Body of pancreas (tissue), 4 donors: ENCODE measurements at regions of chr5 and their contacts with region 1.

Region 1: DNA sequence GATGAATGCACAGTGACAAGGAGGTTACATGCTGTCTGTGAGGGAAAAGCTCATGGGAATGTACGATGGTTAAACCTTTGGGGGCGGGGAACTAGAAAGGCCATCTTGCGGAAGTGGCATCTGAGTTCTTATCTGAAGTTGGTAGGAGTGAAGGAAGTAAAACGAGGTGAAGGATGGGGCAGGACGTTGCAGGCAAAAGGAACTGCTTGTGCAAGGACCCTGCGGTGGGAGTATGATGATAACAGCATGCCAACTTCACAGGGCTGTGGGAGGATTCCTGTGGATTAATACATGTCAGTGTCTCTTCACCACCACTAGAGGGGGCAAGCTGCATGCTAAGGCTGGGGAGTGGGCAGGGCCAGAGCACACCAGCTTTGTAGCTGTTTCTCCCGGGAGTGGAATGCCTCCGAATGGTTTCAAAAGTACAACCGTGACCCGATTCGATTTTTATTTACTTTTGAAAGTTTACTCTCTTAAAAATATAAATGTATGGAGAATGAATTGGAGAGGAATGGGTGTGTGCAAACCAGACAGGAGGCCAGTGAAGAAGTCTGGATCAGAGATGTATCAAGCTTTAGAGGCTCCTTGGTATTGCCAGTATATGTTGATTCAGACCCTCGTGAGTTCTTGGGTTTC is 62.5 kb downstream of the CYFIP2 start:
- DNase-seq: peak; percentile 48 to 70 (median 68)
- ATAC-seq: peak; percentile 93
- H3K4me3 ChIP-seq: no peak overlapping the region
- H3K27ac ChIP-seq: no peak overlapping the region
- H3K4me1 ChIP-seq: no peaks in the 10 kb centered on the region
- H3K27me3 ChIP-seq: no peaks in the 10 kb centered on the region
- CTCF ChIP-seq: peak; percentile 68 to 88 (median 83)
- POLR2A ChIP-seq: no peak

Region 2: DNA sequence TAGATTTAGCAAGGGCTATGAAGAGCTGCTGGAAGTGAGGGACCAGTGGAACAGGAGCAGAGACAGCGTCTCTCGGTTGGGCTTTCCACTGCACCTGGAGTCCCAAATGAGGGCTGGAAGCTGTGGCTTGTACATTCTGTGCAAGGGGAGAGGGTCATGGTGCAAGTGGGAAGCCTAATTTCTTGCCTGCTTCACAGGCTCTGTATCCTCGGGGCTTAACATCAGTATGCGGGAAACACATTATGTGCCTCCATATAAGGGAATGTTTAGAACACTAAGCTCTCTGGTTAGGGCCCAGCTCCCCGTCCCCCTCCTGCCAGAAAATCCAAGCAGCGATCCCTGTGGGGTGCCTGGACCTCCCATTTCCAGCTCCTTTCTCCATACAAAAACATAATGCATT is 42.6 kb after region 1 on chr5:
- intact Hi-C with region 1: no loop called
- DNase-seq: no peak
- ATAC-seq: no peak
- H3K4me3 ChIP-seq: no peak overlapping the region
- H3K27ac ChIP-seq: no peak overlapping the region
- H3K4me1 ChIP-seq: no peaks in the 10 kb centered on the region
- H3K27me3 ChIP-seq: no peaks in the 10 kb centered on the region
- CTCF ChIP-seq: no peak
- POLR2A ChIP-seq: no peak

Region 3: GRCh38 chr5:157476702-157477408 is 148.5 kb after region 1 on chr5:
- intact Hi-C with region 1: loop called (anchors 10 kb)
- DNase-seq: peak; percentile 24 to 59 (median 42)
- ATAC-seq: peak; percentile 77
- H3K4me3 ChIP-seq: no peak overlapping the region
- H3K27ac ChIP-seq: no peak overlapping the region
- H3K4me1 ChIP-seq: no peaks in the 10 kb centered on the region
- H3K27me3 ChIP-seq: no peaks in the 10 kb centered on the region
- CTCF ChIP-seq: peak; percentile 55 to 77 (median 68)
- POLR2A ChIP-seq: no peak